ENCODE measurements at regions of chr15 and their contacts with region 1.

Region 1: GRCh38 chr15:49421991-49422390 is 1.1 kb upstream of the FGF7 start:
- DNase-seq: peak; percentile 81
- ATAC-seq: peak; percentile 50
- H3K4me3 ChIP-seq: no peak overlapping the region
- H3K27ac ChIP-seq: peak overlapping the region; percentile 69; the same call in 1 of the 2 replicates
- H3K4me1 ChIP-seq: no peaks in the 10 kb centered on the region; the same call in 1 of the 2 replicates
- H3K27me3 ChIP-seq: no peaks in the 10 kb centered on the region
- CTCF ChIP-seq: peak; percentile 90
- POLR2A ChIP-seq: no peak
- RAD21 ChIP-seq: peak; percentile 82

Region 2: GRCh38 chr15:48861813-48862431 is 560.1 kb before region 1 on chr15:
- CTCF ChIA-PET with region 1: no interaction called
- POLR2A ChIA-PET with region 1: no interaction called
- dilution Hi-C with region 1: no loop called
- in situ Hi-C with region 1: loop called (anchors 25 kb)
- intact Hi-C with region 1: loop called (anchors 1 kb)
- DNase-seq: peak; percentile 82
- ATAC-seq: peak; percentile 28; the same call in 1 of the 2 replicates
- H3K4me3 ChIP-seq: no peak overlapping the region
- H3K27ac ChIP-seq: no peak overlapping the region
- H3K4me1 ChIP-seq: peaks cover 24% of the 10 kb centered on the region
- H3K27me3 ChIP-seq: no peaks in the 10 kb centered on the region
- CTCF ChIP-seq: peak; percentile 96
- POLR2A ChIP-seq: no peak
- RAD21 ChIP-seq: peak; percentile 99

Region 3: DNA sequence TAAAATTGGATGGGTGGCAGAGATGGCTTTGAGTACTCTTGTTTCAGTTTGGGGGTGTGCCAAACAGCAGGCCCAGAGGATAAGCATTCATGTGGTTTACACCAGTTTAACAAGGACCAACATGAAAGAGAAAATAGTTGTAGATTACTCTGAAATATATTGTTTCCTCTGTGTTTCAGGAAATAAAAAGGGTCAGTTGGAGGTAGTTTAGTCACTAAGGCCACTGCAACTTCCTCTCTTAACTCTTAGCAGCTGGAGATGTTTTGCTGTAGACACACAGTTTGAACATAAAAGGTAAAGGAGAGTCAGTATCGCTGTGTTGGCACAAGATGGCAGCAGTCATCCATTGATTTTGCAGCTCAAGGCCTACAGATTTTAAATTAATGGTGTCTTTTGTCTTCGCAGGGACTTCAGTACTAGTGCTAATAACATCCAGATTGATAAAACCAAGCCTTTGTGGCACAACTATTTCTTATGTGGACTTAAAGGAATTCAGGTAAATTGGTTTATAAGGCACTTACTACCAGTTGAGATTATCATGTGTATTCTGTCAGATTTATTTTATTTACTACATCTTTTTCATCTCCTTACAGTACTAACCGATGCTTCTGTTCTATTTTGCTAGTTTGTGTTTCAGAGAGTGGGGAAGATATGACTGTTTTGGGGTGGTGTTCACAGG is 186.4 kb before region 1 on chr15:
- CTCF ChIA-PET with region 1: interaction called, 20 read pairs
- POLR2A ChIA-PET with region 1: interaction called, 3 read pairs
- dilution Hi-C with region 1: no loop called
- in situ Hi-C with region 1: loop called (anchors 5 kb)
- intact Hi-C with region 1: loop called (anchors 1 kb)
- DNase-seq: peak; percentile 92
- ATAC-seq: peak; percentile 88
- H3K4me3 ChIP-seq: no peak overlapping the region
- H3K27ac ChIP-seq: peak overlapping the region; percentile 70; the same call in 1 of the 2 replicates
- H3K4me1 ChIP-seq: peaks cover 3% of the 10 kb centered on the region
- H3K27me3 ChIP-seq: no peaks in the 10 kb centered on the region
- CTCF ChIP-seq: peak; percentile 91
- POLR2A ChIP-seq: no peak
- RAD21 ChIP-seq: peak; percentile 94

Region 4: DNA sequence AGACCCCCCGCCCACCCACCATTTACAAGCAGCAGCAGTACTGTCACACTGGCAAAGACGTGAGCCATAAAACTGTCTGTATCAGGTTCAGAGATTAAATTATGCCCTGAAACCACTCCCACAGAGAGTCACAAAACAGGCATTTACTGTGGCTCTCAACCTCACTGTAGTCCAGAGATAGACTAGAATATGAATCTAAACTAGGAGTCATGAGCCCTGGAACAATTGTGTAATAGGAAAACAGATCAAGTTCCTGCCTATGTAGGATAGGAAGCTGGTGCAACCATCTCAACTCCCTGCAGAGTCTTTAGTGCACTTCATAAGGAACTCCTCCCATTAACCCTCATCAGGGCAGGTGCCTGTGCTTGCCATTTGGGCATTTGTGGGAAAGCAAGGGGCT is 136.9 kb after region 1 on chr15:
- CTCF ChIA-PET with region 1: no interaction called
- POLR2A ChIA-PET with region 1: no interaction called
- dilution Hi-C with region 1: no loop called
- in situ Hi-C with region 1: no loop called
- intact Hi-C with region 1: no loop called
- DNase-seq: peak; percentile 53
- ATAC-seq: peak; percentile 86
- H3K4me3 ChIP-seq: no peak overlapping the region
- H3K27ac ChIP-seq: no peak overlapping the region
- H3K4me1 ChIP-seq: no peaks in the 10 kb centered on the region
- H3K27me3 ChIP-seq: no peaks in the 10 kb centered on the region
- CTCF ChIP-seq: no peak
- POLR2A ChIP-seq: no peak
- RAD21 ChIP-seq: no peak

Region 5: GRCh38 chr15:49901996-49902684 is 480.1 kb after region 1 on chr15:
- CTCF ChIA-PET with region 1: interaction called, 3 read pairs
- POLR2A ChIA-PET with region 1: no interaction called
- dilution Hi-C with region 1: no loop called
- in situ Hi-C with region 1: no loop called
- intact Hi-C with region 1: loop called (anchors 1 kb)
- DNase-seq: peak; percentile 65
- ATAC-seq: peak; percentile 65
- H3K4me3 ChIP-seq: no peak overlapping the region
- H3K27ac ChIP-seq: peak overlapping the region; percentile 98
- H3K4me1 ChIP-seq: peaks cover 24% of the 10 kb centered on the region
- H3K27me3 ChIP-seq: no peaks in the 10 kb centered on the region
- CTCF ChIP-seq: peak; percentile 66
- POLR2A ChIP-seq: no peak
- RAD21 ChIP-seq: peak; percentile 65

Region 6: GRCh38 chr15:50051803-50052419 is 629.9 kb after region 1 on chr15:
- CTCF ChIA-PET with region 1: interaction called, 3 read pairs
- POLR2A ChIA-PET with region 1: interaction called, 3 read pairs
- dilution Hi-C with region 1: no loop called
- in situ Hi-C with region 1: loop called (anchors 5 kb)
- intact Hi-C with region 1: loop called (anchors 1 kb)
- DNase-seq: peak; percentile 91
- ATAC-seq: peak; percentile 61
- H3K4me3 ChIP-seq: no peak overlapping the region
- H3K27ac ChIP-seq: peak overlapping the region; percentile 73
- H3K4me1 ChIP-seq: peaks cover 24% of the 10 kb centered on the region
- H3K27me3 ChIP-seq: no peaks in the 10 kb centered on the region
- CTCF ChIP-seq: peak; percentile 94
- POLR2A ChIP-seq: no peak; the same call in 1 of the 2 replicates
- RAD21 ChIP-seq: peak; percentile 95

Region 7: DNA sequence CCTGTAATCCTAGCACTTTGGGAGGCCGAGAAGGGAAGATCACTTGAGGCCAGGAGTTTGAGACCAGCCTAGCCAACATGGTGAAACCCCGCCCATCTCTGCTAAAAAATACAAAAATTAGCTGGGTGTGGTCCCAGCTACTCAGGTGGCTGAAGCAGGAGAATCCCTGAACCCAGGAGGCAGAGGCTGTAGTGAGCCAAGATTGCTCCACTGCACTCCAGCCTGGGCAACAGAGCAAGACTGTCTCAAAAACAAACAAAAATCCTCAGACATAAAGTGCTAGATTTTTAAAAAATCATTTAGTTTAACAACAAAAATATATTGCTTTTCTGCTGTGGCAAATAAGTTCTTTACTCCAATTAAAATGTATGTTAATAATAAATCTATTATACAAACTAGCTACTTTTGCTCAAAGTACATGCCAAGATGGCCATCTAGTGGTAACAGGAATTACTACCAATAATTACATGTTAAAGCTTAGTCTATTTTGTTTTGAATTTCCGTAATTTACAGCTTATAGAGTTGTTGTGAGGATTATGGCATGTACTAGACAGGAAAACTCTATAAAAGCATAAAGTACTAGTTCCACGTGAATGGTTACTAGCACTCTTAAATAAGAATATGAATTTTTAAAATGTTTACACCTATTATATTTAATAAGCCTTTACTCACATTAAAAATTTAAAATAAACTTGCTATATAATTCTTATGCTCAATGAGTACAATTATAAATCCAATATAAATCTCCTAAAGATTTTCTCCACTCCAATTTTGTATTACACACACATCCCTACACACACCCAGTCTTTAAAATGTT is 894.0 kb after region 1 on chr15:
- CTCF ChIA-PET with region 1: no interaction called
- POLR2A ChIA-PET with region 1: no interaction called
- dilution Hi-C with region 1: no loop called
- in situ Hi-C with region 1: loop called (anchors 25 kb)
- intact Hi-C with region 1: loop called (anchors 10 kb)
- DNase-seq: peak; percentile 68
- ATAC-seq: peak; percentile 81
- H3K4me3 ChIP-seq: no peak overlapping the region
- H3K27ac ChIP-seq: no peak overlapping the region
- H3K4me1 ChIP-seq: peaks cover 2% of the 10 kb centered on the region; the same call in 1 of the 2 replicates
- H3K27me3 ChIP-seq: no peaks in the 10 kb centered on the region
- CTCF ChIP-seq: peak; percentile 71
- POLR2A ChIP-seq: no peak
- RAD21 ChIP-seq: peak; percentile 77

Measured in IMR-90 (cell line).